Activated CD4-positive, alpha-beta memory T cell treated with anti-CD3 and anti-CD28 coated beads for 36 hours (primary cell): ENCODE measurements at regions of chr22 and their contacts with region 1.

Region 1: GRCh38 chr22:29580200-29580810 is 608 bp downstream of the NIPSNAP1 start:
- DNase-seq: peak; percentile 20
- H3K4me3 Mint-ChIP-seq: peak overlapping the region; percentile 85
- H3K27ac Mint-ChIP-seq: peak overlapping the region; percentile 82
- H3K4me1 Mint-ChIP-seq: peaks cover 13% of the 10 kb centered on the region
- H3K27me3 Mint-ChIP-seq: no peaks in the 10 kb centered on the region

Region 2: DNA sequence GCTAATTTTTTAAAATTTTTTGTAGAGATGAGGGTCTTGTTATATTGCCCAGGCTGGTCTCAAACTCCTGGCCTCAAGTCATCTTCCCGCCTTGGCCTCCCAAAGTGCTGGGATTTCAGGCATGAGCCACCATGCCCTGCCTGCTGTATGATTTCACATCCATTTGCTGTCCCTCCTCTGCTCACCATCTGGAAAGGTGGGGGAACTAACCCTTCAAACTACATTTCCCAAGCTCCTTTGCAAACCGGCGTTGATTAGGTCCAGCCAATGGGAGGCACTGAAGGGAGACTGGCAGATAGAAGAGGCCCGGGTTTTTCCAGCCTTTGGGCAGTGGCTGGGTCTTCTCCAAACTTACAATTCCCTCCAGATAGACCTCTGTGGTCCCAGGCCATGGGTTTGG is 122.6 kb before region 1 on chr22:
- CTCF ChIA-PET with region 1: no interaction called
- POLR2A ChIA-PET with region 1: no interaction called
- intact Hi-C with region 1: no loop called
- DNase-seq: no peak
- H3K4me3 Mint-ChIP-seq: no peak overlapping the region
- H3K27ac Mint-ChIP-seq: no peak overlapping the region
- H3K4me1 Mint-ChIP-seq: no peaks in the 10 kb centered on the region
- H3K27me3 Mint-ChIP-seq: no peaks in the 10 kb centered on the region

Region 3: DNA sequence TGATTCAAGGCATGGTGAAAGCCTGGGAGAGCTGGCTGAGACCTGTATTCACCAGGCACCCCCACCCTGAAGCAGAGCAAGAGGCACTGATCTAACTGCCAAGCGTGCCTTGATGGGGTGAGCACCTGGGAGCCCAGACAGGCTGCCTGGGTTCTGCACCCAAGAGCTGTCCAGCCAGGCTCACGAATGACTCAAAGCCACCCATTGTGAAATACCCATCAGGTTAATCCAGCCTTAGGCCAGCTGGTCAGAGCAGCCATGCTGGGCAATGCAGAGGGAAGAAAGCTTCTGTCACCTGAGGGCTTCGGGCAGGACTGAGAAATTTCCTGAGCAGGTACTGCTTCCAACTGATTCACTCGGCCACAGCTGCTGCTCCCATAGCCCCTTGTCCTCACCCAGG is 48.9 kb before region 1 on chr22:
- CTCF ChIA-PET with region 1: no interaction called
- POLR2A ChIA-PET with region 1: no interaction called
- intact Hi-C with region 1: no loop called
- DNase-seq: no peak
- H3K4me3 Mint-ChIP-seq: no peak overlapping the region
- H3K27ac Mint-ChIP-seq: no peak overlapping the region
- H3K4me1 Mint-ChIP-seq: no peaks in the 10 kb centered on the region
- H3K27me3 Mint-ChIP-seq: no peaks in the 10 kb centered on the region

Region 4: DNA sequence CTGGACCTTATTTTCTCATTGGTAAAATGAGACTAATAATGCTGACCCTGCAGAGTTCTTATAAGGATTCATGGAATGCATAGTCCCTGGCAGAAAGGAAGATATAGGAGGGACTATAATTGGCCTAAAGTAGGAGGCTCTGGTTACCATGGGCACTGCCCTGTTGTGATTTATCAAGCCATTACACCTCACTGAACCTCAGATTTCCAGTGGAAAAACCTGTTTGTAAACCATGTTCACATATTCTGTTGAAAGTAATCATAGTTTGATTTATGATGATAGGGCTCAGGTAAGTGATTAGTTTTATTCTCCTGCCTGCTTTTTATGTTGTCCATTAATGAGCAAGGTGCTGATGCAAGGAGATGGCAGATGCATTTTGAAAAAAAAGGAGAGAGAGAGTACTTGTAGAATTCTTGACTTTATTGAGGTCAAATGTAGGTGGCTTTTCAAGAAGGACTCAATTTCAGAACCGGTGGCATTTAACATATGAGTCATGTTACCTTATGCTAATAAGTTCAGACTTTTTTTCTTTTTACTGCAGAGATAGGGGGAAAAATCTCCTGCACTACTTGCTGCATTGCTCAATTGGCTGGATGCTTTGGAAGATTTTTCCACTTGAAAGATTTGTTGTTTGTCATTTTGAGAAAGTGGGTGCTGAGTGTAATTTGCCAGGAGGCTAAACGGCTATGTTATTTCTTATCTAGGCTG is 37.8 kb after region 1 on chr22:
- CTCF ChIA-PET with region 1: no interaction called
- POLR2A ChIA-PET with region 1: no interaction called
- intact Hi-C with region 1: loop called (anchors 2 kb)
- DNase-seq: no peak
- H3K4me3 Mint-ChIP-seq: no peak overlapping the region
- H3K27ac Mint-ChIP-seq: peak overlapping the region; percentile 35
- H3K4me1 Mint-ChIP-seq: peaks cover 34% of the 10 kb centered on the region
- H3K27me3 Mint-ChIP-seq: no peaks in the 10 kb centered on the region